Activated T-helper 2 cell treated with anti-CD3 and anti-CD28 coated beads, Interferon-gamma antibody, Interleukin-2, Interleukin-4, amounts not matched to agents 10 μg/mL and 5 μg/mL and 100 μg/mL, durations not matched to agents 14 hours and 24 hours and 36 hours (primary cell): ENCODE measurements at regions of chr9 and their contacts with region 1.

Region 1: GRCh38 chr9:127970401-127971313 is 10.1 kb downstream of the EEIG1 start:
- DNase-seq: peak; percentile 73
- H3K4me3 Mint-ChIP-seq: peak overlapping the region; percentile 71
- H3K27ac Mint-ChIP-seq: peak overlapping the region; percentile 91
- H3K4me1 Mint-ChIP-seq: peaks cover 83% of the 10 kb centered on the region
- H3K27me3 Mint-ChIP-seq: no peaks in the 10 kb centered on the region

Region 2: GRCh38 chr9:127396808-127397497 is 573.7 kb before region 1 on chr9 and contains the start of gene SLC2A8:
- intact Hi-C with region 1: no loop called
- DNase-seq: peak; percentile 97
- H3K4me3 Mint-ChIP-seq: peak within 1 kb of the TSS; percentile 83
- H3K27ac Mint-ChIP-seq: peak within 1 kb of the TSS; percentile 69
- H3K4me1 Mint-ChIP-seq: peaks cover 18% of the 10 kb centered on the region
- H3K27me3 Mint-ChIP-seq: peaks cover 32% of the 10 kb centered on the region
- total RNA-seq, gene SLC2A8: 9.8 and 10.7 TPM in 2 replicates

Region 3: GRCh38 chr9:127943731-127944144 is 26.9 kb before region 1 on chr9:
- intact Hi-C with region 1: loop called (anchors 2 kb)
- DNase-seq: peak; percentile 65
- H3K4me3 Mint-ChIP-seq: no peak overlapping the region
- H3K27ac Mint-ChIP-seq: peak overlapping the region; percentile 51
- H3K4me1 Mint-ChIP-seq: peaks cover 15% of the 10 kb centered on the region
- H3K27me3 Mint-ChIP-seq: no peaks in the 10 kb centered on the region

Region 4: DNA sequence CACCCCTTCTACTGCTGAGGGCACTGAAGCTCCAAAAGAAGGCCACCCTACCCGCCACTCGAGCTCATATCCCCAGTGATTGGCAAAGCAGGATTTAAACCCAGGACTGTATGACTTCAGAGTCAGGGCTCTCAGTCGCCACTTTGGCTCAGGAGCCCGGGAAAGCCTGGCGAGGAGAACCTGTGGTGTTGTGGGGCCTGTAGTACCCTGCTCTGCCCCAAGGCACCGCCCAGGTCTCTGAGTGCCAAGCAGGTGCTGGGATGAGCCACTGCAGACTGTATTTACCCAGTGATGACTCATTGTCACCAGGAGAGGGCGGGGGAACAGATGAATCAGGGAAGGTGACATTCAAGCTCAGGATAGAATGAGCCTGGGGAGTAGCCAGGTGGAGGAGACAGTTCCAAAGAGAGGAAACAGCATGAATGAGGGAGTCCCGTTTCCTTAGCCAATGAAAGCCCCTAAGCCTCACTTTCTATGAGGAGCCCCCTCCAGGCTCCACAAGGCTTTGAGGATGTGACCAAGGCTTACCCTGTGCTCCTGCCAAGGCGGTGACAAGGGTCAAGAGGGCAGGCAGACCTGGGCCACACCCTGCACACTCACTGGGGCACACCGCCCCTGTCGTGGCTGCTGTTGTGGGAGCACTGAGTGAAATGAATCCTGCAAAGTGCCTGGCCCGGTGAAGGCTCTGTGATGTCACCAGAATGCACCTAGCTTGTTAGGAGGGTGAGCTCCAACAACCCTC is 15.2 kb before region 1 on chr9:
- intact Hi-C with region 1: loop called (anchors 1 kb)
- DNase-seq: peak; percentile 60
- H3K4me3 Mint-ChIP-seq: peak overlapping the region; percentile 22
- H3K27ac Mint-ChIP-seq: peak overlapping the region; percentile 65
- H3K4me1 Mint-ChIP-seq: peaks cover 61% of the 10 kb centered on the region
- H3K27me3 Mint-ChIP-seq: no peaks in the 10 kb centered on the region

Region 5: GRCh38 chr9:127980706-127981558 is 10.3 kb after region 1 on chr9 and contains the start of gene EEIG1:
- intact Hi-C with region 1: loop called (anchors 1 kb)
- DNase-seq: peak; percentile 97
- H3K4me3 Mint-ChIP-seq: peak within 1 kb of the TSS; percentile 90
- H3K27ac Mint-ChIP-seq: peak within 1 kb of the TSS; percentile 94
- H3K4me1 Mint-ChIP-seq: peaks cover 49% of the 10 kb centered on the region
- H3K27me3 Mint-ChIP-seq: no peaks in the 10 kb centered on the region
- total RNA-seq, gene EEIG1: 43.8 and 53.3 TPM in 2 replicates

Region 6: GRCh38 chr9:128026773-128027541 is 56.3 kb after region 1 on chr9:
- intact Hi-C with region 1: loop called (anchors 1 kb)
- DNase-seq: peak; percentile 44
- H3K4me3 Mint-ChIP-seq: peak overlapping the region; percentile 65
- H3K27ac Mint-ChIP-seq: peak overlapping the region; percentile 92
- H3K4me1 Mint-ChIP-seq: peaks cover 76% of the 10 kb centered on the region
- H3K27me3 Mint-ChIP-seq: no peaks in the 10 kb centered on the region

Region 7: DNA sequence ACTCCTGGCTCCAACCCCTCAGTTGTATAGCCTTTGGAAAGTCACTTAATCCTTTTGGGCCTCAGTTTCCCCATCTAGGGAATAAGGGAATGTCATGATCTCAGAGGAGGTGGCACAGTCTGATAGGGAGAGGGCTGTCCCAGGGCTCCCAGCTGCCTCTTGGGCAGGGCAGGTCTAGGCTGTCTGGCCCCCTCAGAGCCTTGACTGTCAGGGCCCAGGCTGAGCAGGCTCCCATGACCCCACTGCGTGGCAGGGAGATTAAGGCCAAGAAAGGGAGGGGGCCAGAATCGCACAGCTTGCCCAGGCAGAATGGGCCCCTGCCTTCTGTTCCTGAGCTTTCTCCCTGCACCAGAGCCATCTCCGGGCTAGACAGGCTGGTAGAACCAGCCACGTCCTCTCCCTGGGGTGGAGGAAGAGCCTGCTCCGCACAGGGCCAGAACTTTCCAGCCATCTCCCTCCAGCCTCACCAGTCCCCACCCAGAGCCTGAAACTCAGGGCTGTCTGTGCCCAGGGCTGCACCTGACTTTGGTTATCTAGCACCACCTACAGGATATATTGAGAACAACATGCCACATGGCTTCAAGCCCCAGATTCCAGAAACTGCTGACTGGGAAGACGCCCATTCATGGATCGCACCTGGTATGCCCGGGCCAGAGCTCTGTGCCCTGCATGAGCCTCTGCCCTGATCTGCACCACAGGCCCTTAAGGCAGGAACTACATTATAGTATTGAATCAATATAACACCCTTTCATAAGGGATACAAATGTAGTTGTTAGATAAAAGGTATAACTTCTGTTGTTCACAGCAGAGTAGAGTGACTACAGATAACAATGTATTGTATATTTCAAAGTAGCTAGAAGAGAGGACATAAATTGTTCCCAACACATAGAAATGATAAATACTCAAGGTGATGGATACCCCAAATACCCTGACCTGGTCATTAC is 64.4 kb after region 1 on chr9:
- intact Hi-C with region 1: loop called (anchors 1 kb)
- DNase-seq: peak; percentile 65
- H3K4me3 Mint-ChIP-seq: no peak overlapping the region
- H3K27ac Mint-ChIP-seq: no peak overlapping the region
- H3K4me1 Mint-ChIP-seq: peaks cover 24% of the 10 kb centered on the region
- H3K27me3 Mint-ChIP-seq: no peaks in the 10 kb centered on the region